ENCODE measurements at regions of chr2 and their contacts with region 1.

Region 1: DNA sequence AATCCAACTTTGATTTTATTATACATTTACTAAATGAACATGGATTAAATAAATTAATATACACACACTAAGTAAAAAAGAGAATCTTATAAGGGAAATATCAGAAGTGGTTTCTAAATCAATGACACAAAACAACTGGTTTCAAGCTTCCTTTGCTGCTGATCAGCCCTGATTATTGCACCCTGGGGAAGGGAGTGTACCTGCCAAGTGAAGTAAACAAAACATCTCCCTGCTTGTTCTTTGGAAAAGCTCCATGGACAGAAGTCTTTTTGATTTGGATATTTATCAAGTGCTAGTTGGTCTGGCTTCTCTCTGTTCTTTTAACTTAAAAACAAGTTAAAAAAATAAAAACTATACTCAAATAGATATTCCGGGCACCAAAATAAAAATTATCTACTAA is 190.1 kb downstream of the PDE11A start:
- DNase-seq: no peak
- ATAC-seq: peak in 1 of 4 donors; percentile 60
- H3K4me3 ChIP-seq: no peak overlapping the region
- H3K27ac ChIP-seq: peak overlapping the region in 3 of 12 donors; percentile 21 to 57 (median 40)
- H3K4me1 ChIP-seq: peaks cover 0 to 18% (median 0%) of the 10 kb centered on the region in 12 donors
- H3K27me3 ChIP-seq: no peaks in the 10 kb centered on the region
- CTCF ChIP-seq: no peak
- POLR2A ChIP-seq: no peak

Region 2: GRCh38 chr2:177772529-177772928 is 110.0 kb before region 1 on chr2:
- intact Hi-C with region 1: loop called in 1 of 10 experiments (anchors 5 kb)
- DNase-seq: no peak
- ATAC-seq: no peak
- H3K4me3 ChIP-seq: no peak overlapping the region
- H3K27ac ChIP-seq: no peak overlapping the region
- H3K4me1 ChIP-seq: peaks cover 0 to 3% (median 0%) of the 10 kb centered on the region in 12 donors
- H3K27me3 ChIP-seq: no peaks in the 10 kb centered on the region
- CTCF ChIP-seq: peak; percentile 31 to 61 (median 41)
- POLR2A ChIP-seq: no peak

Measured in heart left ventricle (tissue), 16 donors.